ENCODE measurements at regions of chr22 and their contacts with region 1.

Region 1: DNA sequence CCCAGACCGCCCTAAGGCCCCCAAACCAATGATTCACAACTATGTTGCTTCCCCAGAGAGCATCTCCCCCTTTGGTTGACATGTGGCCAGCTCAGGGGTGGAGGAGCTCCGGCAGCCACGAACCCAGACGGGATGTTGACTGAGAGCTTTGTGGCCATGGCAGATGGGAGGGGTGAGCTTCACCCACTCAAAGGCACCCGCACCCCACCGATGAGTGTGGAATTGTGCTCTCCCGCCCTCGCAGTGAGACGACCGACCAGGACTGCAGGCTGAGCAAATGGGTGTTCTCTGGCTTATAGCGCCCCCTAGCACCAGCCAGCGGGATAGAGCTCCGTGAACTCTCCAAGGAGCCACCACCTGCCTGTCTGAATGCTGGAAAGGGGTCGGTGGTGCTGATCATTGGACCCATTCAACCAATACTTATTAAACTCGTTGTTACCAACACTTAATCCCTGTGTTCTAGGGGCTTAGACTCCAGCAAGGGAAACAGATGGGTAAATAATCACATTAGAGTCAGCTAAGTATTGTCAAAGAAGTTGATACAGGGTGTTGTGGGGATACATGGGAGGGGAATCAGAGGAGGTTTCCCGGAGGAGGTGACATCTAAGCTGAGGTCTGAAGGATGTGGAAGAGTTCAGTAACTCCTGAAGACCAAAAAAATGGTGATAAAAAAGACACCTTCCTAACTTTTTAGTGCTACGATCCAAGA is 4.5 kb upstream of the TIMP3 start:
- DNase-seq: peak; percentile 83
- H3K4me3 ChIP-seq: no peak overlapping the region
- H3K27ac ChIP-seq: peak overlapping the region in 1 of 8 donors; percentile 37
- H3K4me1 ChIP-seq: peaks cover 0 to 26% (median 14%) of the 10 kb centered on the region in 6 donors
- H3K27me3 ChIP-seq: peaks cover 0 to 47% (median 10%) of the 10 kb centered on the region in 7 donors
- CTCF ChIP-seq: peak; percentile 61 to 90 (median 80)
- POLR2A ChIP-seq: no peak

Region 2: DNA sequence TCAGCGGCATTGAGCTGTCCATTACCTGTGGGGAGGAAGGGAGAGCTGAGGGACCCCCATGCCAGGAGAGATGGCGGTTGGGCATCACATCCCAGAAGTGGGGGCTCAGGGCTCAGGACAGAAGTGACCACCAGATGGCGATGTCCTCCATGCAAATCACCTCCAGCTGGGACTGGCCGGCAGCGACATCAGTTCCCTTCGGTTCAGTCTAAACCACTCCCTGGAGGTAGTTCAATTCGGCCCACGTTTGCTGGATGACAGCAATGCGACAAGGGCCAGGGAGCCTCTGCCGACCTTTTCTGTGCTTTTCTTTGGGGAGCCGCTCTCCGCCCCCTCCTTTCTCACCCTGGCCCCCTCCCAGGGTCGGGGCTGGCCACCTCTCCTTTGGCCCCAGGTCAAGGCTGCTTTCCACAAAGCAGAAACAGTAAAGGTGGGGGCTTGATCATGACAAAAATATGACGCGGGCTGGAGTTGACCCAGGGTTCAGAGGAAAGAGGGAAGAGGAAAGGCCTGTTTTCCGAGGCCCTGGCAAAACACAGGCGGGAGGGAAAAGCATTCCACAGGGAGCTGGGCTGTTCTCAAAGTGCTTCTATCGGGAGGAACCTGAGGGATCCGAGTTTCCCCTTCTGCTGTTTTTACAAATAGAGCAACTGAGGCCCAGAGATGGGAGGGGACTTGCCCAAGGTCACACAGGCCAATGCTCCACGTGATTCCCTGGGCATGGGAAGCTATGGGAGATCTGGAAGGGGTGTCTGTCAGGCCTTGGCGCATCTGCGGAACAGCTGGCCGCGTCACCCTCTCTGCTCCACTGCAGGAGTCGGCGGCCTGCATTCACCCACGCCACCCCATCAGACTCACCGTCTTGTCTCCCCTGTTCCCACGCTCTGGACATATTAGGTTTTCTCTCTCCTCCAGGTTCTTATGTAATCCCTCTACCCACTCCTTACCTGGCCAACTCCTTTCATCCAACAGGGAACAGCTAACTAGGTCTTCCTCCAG is 267.7 kb before region 1 on chr22:
- intact Hi-C with region 1: loop called (anchors 5 kb)
- DNase-seq: peak; percentile 89
- H3K4me3 ChIP-seq: no peak overlapping the region
- H3K27ac ChIP-seq: peak overlapping the region; percentile 45 to 90 (median 77)
- H3K4me1 ChIP-seq: peaks cover 5 to 57% (median 23%) of the 10 kb centered on the region in 6 donors
- H3K27me3 ChIP-seq: peaks cover 0 to 24% (median 0%) of the 10 kb centered on the region in 7 donors
- CTCF ChIP-seq: peak; percentile 74 to 93 (median 85)
- POLR2A ChIP-seq: no peak

Region 3: GRCh38 chr22:32660292-32660691 is 136.7 kb before region 1 on chr22:
- intact Hi-C with region 1: loop called (anchors 5 kb)
- DNase-seq: no peak
- H3K4me3 ChIP-seq: no peak overlapping the region
- H3K27ac ChIP-seq: no peak overlapping the region
- H3K4me1 ChIP-seq: peaks cover 0 to 12% (median 3%) of the 10 kb centered on the region in 6 donors
- H3K27me3 ChIP-seq: peaks cover 0 to 12% (median 0%) of the 10 kb centered on the region in 7 donors
- CTCF ChIP-seq: peak; percentile 42 to 83 (median 70)
- POLR2A ChIP-seq: no peak

Region 4: GRCh38 chr22:32920032-32920628 is 123.1 kb after region 1 on chr22:
- intact Hi-C with region 1: no loop called
- DNase-seq: no peak
- H3K4me3 ChIP-seq: no peak overlapping the region
- H3K27ac ChIP-seq: peak overlapping the region in 2 of 8 donors; percentile 8 to 44
- H3K4me1 ChIP-seq: peaks cover 5 to 37% (median 24%) of the 10 kb centered on the region in 6 donors
- H3K27me3 ChIP-seq: no peaks in the 10 kb centered on the region
- CTCF ChIP-seq: no peak
- POLR2A ChIP-seq: no peak

Region 5: DNA sequence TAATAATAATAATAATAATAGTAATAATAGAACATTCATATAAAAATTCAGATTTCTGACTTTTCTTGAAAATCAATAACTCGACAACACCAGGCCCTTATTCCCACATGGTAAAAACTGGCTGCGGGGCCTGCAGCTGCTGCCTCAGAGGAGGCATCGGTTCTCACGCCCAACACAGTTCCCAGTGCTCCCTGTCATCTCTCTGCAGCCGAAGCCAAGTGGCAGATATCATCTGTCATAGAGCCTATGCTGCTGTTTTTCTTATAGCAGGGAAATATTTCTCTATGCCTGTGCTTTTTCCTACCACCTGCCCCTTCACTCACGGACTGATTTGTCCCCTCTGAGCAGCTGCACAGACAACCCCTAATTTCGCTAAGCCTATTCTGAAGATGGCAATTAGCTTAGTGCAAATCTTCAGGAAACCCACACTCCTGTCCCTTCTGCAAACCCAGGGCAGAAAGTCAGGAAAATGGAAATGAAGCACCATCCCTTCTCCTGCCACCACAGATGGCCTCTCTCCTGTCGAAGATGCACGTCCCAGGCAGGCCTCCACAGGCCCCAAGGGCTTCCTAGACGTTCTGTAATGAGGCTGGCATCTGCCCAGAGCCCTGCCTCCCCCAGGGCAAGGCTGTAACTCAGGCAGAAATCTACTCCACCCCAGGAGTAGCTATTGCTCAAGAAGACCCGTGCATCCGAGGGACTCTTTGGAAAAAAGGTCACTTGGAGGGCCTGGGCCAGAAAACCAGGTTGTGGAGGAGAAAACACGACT is 194.5 kb after region 1 on chr22:
- intact Hi-C with region 1: loop called (anchors 10 kb)
- DNase-seq: no peak
- H3K4me3 ChIP-seq: no peak overlapping the region
- H3K27ac ChIP-seq: no peak overlapping the region
- H3K4me1 ChIP-seq: peaks cover 0 to 19% (median 6%) of the 10 kb centered on the region in 6 donors
- H3K27me3 ChIP-seq: no peaks in the 10 kb centered on the region
- CTCF ChIP-seq: no peak
- POLR2A ChIP-seq: no peak

Measured in spleen (tissue), 13 donors.